Endothelial cell of umbilical vein (primary cell): ENCODE measurements at regions of chr4 and their contacts with region 1.

Region 1: DNA sequence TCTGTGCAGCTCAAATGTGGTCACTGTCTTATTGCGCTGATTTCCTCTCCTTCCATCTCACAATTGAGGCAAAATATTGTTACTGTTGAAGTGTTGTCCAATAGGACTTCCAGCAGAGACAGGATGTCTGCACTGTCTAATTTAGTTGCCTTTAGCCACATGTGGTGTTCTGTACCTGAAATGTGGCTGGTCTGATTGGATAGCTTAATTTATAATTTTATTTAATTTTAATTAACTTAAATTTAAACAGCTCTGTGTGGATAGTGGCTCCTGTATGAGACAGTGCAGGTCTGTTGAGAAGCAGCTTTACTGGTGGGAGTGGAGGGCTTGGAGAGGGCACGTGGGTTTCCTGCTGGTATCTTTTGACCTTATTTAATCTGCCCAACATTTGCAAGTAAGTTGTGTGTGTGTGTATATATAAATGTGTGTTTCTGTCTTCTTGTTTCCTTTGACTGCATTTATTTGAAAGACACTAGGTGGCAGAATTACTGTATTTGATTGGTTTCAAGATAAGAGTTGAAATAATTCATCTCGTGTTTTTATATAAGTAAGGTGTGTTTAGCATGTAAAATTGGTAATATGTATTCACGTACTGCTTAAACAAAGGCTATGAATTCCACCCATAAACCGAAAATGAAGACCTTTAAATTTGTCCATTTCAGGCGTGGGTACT is 55.3 kb upstream of the MSANTD1 start:
- DNase-seq: peak; percentile 44
- H3K4me3 ChIP-seq: no peak overlapping the region
- H3K27ac ChIP-seq: no peak overlapping the region
- H3K4me1 ChIP-seq: no peaks in the 10 kb centered on the region
- H3K27me3 ChIP-seq: no peaks in the 10 kb centered on the region
- CTCF ChIP-seq: peak; percentile 18 to 20
- POLR2A ChIP-seq: no peak

Region 2: DNA sequence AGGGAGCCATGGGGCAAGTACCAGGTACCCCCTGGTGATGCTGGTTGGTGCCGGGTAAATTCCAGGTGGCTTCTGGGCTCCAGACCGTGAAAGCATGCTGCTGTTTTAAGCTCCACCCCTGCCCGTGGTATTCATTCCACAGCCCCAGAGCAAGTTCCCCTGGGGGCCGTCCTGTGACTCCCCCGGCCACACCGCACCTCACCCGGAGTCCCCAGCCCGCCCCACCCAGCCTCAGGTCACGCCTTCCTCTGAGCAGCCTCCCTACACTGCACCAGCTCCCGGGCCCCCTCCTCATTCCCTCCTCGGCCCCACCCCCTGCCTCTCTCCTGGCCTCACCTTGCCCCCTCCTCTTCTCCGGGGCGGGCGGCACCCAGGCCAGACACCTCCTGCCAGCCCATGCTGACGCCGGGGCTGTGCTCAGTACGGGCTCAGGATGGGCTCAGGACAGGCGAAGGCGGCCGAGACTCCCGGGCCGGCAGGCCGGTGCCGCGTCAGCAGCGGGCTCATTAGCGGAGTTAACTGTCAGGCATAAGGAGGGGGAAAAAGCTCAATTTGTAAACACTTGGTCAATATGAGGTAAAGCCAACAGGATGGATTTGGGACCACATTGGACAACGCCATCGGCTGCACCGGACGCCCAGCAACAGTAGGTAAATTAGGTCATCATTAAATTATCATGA is 1637.0 kb before region 1 on chr4:
- CTCF ChIA-PET with region 1: no interaction called
- POLR2A ChIA-PET with region 1: no interaction called
- dilution Hi-C with region 1: no loop called
- intact Hi-C with region 1: no loop called
- DNase-seq: no peak
- H3K4me3 ChIP-seq: no peak overlapping the region
- H3K27ac ChIP-seq: no peak overlapping the region
- H3K4me1 ChIP-seq: no peaks in the 10 kb centered on the region
- H3K27me3 ChIP-seq: no peaks in the 10 kb centered on the region
- CTCF ChIP-seq: no peak
- POLR2A ChIP-seq: no peak

Region 3: DNA sequence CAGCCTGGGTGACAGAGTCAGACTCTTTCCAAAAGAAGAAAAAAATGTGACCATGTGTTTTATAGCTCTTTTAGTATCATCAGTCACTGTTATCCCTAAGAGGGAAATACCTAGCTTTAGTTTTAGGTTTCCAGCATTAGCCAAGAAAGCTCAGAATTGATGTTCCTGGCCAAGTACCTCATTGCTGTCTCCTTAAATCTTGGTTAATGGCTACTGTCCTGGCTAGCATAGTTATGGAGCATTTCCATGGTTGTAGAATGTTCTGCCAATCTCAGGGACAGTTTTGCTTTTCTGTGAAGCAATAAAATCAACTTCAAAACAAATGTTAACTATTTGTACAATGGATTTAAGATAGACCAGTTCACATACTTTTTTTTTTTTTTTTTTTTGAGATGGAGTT is 44.7 kb before region 1 on chr4:
- CTCF ChIA-PET with region 1: no interaction called
- POLR2A ChIA-PET with region 1: no interaction called
- dilution Hi-C with region 1: no loop called
- intact Hi-C with region 1: no loop called
- DNase-seq: no peak
- H3K4me3 ChIP-seq: no peak overlapping the region
- H3K27ac ChIP-seq: no peak overlapping the region
- H3K4me1 ChIP-seq: no peaks in the 10 kb centered on the region
- H3K27me3 ChIP-seq: no peaks in the 10 kb centered on the region
- CTCF ChIP-seq: no peak
- POLR2A ChIP-seq: no peak

Region 4: DNA sequence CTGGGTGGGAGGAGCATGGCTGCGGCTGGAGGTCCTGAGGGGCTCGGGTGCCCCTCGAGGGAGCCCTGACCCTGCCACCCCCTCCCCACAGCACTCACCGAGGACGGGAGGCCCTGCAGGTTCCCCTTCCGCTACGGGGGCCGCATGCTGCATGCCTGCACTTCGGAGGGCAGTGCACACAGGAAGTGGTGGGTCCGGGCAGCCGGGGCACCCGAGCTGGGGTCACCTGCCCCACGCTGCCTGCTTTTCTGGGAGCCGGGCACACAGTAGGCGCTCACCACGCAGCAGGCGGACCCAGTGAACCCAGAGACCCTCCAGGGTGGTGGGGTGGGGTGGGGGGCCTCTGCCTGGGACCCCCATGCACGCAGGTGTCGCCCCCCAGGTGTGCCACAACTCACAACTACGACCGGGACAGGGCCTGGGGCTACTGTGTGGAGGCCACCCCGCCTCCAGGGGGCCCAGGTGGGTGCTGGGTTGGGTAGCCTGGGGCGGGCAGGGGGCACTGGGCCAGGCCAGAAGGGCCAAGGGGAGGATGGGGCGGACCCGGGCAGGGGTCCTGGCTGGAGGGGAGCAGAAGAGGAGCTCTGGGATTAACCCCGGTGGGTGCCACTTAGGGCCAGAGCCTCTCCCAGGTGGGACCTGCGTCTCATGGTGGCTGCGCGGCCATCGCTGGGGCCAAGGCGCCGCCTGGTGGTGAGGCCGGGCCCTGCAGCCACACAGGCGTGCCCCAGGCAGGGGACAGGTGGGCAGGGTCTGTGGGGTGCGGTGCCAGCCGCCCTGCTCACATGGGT is 249.5 kb after region 1 on chr4:
- CTCF ChIA-PET with region 1: interaction called, 19 read pairs
- POLR2A ChIA-PET with region 1: no interaction called
- dilution Hi-C with region 1: no loop called
- intact Hi-C with region 1: loop called (anchors 1 kb)
- DNase-seq: peak; percentile 27
- H3K4me3 ChIP-seq: no peak overlapping the region
- H3K27ac ChIP-seq: no peak overlapping the region
- H3K4me1 ChIP-seq: no peaks in the 10 kb centered on the region
- H3K27me3 ChIP-seq: no peaks in the 10 kb centered on the region
- CTCF ChIP-seq: peak; percentile 95 to 98
- POLR2A ChIP-seq: no peak

Region 5: GRCh38 chr4:3452376-3452775 is 258.7 kb after region 1 on chr4:
- CTCF ChIA-PET with region 1: interaction called, 10 read pairs
- POLR2A ChIA-PET with region 1: no interaction called
- dilution Hi-C with region 1: no loop called
- intact Hi-C with region 1: no loop called
- DNase-seq: no peak
- H3K4me3 ChIP-seq: no peak overlapping the region
- H3K27ac ChIP-seq: no peak overlapping the region
- H3K4me1 ChIP-seq: peaks cover 4% of the 10 kb centered on the region
- H3K27me3 ChIP-seq: peaks cover 0 to 2% of the 10 kb centered on the region in 2 experiments
- CTCF ChIP-seq: peak; percentile 38 to 59
- POLR2A ChIP-seq: no peak